K562 (cell line): ENCODE measurements at regions of chr21 and their contacts with region 1.

Region 1: GRCh38 chr21:26297851-26298250 is 127.3 kb upstream of the APP start:
- DNase-seq: no peak
- ATAC-seq: no peak
- H3K4me3 ChIP-seq: no peak overlapping the region
- H3K27ac ChIP-seq: no peak overlapping the region
- H3K4me1 ChIP-seq: no peaks in the 10 kb centered on the region
- H3K27me3 ChIP-seq: no peaks in the 10 kb centered on the region
- CTCF ChIP-seq: no peak
- EP300 ChIP-seq: no peak
- POLR2A ChIP-seq: no peak
- RAD21 ChIP-seq: no peak

Region 2: DNA sequence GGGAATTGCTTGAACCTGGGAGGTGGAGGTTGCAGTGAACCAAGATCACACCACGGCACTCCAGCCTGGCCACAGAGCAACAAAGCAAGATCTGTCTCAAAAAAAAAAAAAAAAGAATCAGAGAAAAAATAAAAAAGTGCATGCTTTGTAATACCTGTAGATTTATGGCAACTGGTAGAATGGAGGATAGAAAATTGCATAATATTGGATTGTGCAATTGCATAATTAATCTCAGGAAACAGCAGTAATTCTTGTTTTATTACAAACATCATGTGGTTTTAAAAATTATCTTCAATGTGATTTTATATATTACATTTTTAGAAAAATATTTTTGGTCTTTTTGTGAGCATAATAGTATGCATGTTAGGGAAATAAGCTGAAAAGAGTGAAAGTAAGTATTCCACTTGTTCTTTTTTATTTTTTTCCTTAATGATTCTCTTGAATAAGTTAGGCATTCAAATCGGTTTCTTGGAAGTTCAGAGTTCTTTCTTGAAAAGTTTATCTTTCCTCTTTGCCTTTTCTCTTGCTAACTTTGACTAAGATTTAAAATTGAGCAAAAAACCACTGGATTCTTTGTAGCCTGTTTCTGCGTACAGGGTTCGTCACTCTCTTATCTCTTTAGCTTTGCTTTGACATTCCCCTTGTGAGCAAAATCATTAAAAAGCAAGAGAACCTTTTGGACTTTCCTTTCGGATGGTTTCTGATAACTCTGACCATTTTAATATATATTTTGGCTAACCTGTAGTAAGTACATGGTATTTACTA is 796.5 kb after region 1 on chr21:
- CTCF ChIA-PET with region 1: no interaction called
- POLR2A ChIA-PET with region 1: no interaction called
- in situ Hi-C with region 1: no loop called
- intact Hi-C with region 1: loop called (anchors 10 kb)
- DNase-seq: no peak
- ATAC-seq: no peak
- H3K4me3 ChIP-seq: no peak overlapping the region
- H3K27ac ChIP-seq: no peak overlapping the region
- H3K4me1 ChIP-seq: no peaks in the 10 kb centered on the region
- H3K27me3 ChIP-seq: no peaks in the 10 kb centered on the region
- CTCF ChIP-seq: no peak
- EP300 ChIP-seq: no peak
- POLR2A ChIP-seq: no peak
- RAD21 ChIP-seq: no peak